AG04449 (cell line): ENCODE measurements at regions of chr17 and their contacts with region 1.

Region 1: GRCh38 chr17:80180192-80180591 is 10.4 kb downstream of the CARD14 start:
- DNase-seq: no peak
- H3K4me3 ChIP-seq: no peak overlapping the region
- CTCF ChIP-seq: no peak

Region 2: DNA sequence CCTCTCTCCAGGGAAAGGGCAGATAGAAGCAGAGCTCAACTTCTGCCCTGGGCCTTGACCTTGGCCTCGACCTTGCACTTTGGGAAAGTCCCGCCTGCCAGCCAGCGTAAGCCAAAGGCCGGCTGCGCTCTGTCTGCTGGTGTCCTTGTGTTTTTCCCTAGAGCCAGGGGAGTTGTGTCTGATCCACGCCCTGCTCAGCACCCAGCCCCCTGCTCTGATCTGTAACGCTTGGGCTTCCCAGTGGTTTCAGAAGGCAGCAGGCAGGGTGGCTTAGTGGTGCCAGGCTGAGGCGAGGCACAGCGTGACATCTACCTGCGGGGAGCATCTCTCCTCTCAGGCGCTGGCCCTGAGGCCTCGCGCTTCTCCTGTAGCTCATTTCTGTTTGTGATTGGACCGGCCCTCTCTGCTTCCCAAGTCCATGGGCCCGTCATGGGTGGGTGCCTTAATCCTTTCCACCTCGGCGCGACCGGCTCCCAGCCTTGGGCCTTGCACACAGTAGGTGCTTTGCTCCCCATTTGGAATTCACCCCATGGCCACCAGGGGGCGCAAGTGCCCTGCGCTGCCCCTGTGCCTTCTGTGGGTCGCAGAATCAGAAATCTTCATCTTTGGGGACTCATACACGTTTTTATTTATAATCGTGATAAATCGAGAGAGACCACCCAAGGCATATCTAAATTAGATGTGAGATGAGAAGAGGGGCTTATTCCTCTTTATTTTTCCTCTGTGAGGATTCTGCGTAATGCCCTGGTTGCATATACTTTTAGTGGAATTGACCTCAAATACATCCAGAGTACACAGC is 15.7 kb after region 1 on chr17:
- CTCF ChIA-PET with region 1: interaction called, 11 read pairs
- POLR2A ChIA-PET with region 1: interaction called, 3 read pairs
- DNase-seq: no peak
- H3K4me3 ChIP-seq: no peak overlapping the region
- CTCF ChIP-seq: peak; percentile 85